Ovary (tissue), 10 donors: ENCODE measurements at regions of chr4 and their contacts with region 1.

Region 1: DNA sequence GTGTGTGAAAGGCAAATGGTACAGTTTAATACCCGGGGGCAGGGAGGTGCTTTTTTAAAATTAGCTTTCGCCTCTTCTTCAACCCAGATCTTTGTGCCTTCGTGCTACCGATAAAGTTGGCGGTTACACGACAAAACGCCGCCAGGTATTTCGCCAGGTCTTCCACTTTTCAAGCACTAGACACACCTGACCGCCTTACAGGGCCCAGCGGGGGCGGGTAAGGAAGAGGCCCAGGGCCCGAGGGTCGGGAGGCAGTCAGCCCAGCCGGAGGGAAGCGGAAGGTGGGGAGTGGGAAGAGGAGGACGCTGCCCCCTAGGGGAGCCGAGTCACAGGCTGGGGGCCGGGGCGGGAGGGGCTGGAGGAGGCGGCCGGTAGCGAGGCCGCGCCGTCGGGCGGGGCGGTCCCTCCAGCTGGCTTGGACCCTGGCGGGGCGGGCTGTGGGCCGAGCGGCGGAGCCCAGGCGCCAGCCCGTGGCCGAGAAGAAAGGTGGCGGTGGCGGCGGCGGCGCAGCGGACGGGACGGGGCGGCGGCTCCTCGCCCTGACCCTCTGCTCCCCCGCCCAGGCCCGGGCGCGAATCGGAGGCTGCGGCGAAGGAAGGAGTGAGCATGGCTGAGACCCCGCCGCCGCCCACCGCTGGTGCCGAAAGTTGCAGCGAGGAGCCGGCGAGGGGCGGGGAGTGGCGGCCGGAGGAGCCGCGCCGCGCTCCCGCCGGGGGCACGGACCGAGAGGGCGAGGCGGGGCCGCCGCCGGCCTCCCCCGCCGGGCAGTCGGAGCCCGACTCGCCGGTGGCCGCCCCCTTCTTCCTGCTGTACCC is 16.2 kb downstream of the UTP3 start:
- DNase-seq: peak; percentile 84 to 87 (median 85)
- H3K4me3 ChIP-seq: peak overlapping the region; percentile 95
- H3K27ac ChIP-seq: peak overlapping the region; percentile 84 to 93
- H3K4me1 ChIP-seq: peaks cover 2% of the 10 kb centered on the region
- H3K27me3 ChIP-seq: no peaks in the 10 kb centered on the region
- CTCF ChIP-seq: peak in 1 of 3 donors; percentile 13
- EP300 ChIP-seq: no peak
- POLR2A ChIP-seq: peak; percentile 13

Region 2: GRCh38 chr4:70778888-70779422 is 74.4 kb after region 1 on chr4:
- intact Hi-C with region 1: loop called in 1 of 4 experiments (anchors 10 kb)
- DNase-seq: peak in 1 of 5 donors; percentile 15
- H3K4me3 ChIP-seq: no peak overlapping the region
- H3K27ac ChIP-seq: peak overlapping the region in 1 of 2 donors; percentile 48
- H3K4me1 ChIP-seq: peaks cover 2% of the 10 kb centered on the region
- H3K27me3 ChIP-seq: no peaks in the 10 kb centered on the region
- CTCF ChIP-seq: no peak
- EP300 ChIP-seq: no peak
- POLR2A ChIP-seq: no peak